Activated naive CD4-positive, alpha-beta T cell treated with anti-CD3 and anti-CD28 coated beads for 36 hours (primary cell): ENCODE measurements at regions of chr7 and their contacts with region 1.

Region 1: GRCh38 chr7:98106647-98107445 is at the start of gene LMTK2:
- DNase-seq: peak; percentile 96
- H3K4me3 Mint-ChIP-seq: peak within 1 kb of the TSS; percentile 94
- H3K27ac Mint-ChIP-seq: peak within 1 kb of the TSS; percentile 72
- H3K4me1 Mint-ChIP-seq: peaks cover 38% of the 10 kb centered on the region
- H3K27me3 Mint-ChIP-seq: peaks cover 8% of the 10 kb centered on the region
- total RNA-seq, gene LMTK2: 11.4 to 13.1 TPM

Region 2: DNA sequence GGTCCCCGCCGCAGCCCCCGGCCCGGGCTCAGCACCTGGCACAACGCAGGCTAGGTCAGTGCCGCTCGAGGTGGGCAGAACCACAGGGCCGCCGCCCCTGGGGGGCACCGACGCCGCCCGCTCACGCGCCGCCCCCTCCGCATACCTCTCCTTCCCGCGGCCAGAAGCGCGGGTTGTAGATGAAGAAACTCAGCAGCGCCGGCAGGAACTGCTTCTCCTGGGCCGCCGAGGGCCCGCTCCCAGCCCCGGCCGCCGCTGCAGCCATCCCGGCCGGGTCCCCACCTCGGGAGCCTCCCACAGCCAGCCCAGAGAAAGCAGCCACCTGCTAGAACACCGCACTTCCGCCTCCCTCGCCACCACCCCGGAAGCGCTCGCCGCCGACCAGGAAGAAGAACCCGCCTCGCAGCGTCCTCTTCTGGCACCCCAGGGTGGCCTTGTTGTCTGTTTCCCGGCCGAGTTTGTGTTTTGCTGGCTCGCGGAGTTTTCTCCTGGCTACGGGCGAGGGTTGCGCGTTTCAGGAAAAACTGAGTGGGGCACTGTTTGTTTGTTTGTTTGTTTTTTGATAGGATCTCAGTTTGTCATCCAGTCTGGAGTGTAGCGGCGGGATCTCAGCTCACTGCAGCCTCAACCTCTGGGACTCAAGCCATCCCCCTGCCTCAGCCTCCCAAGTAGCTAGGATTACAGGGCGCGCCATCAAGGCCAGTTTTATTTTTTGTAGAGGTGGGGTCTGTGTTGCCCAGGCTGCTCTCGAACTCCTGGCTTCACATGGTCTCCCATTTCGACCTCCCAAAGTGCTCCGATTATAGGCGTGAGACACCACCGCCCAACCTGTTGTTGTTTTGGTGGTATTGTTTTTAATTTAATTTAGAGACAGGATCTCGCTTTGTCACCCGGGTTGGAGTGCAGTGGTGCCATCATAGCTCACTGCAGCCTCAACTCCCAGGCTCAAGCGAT is 134.6 kb before region 1 on chr7:
- CTCF ChIA-PET with region 1: no interaction called
- intact Hi-C with region 1: loop called (anchors 1 kb)
- DNase-seq: peak; percentile 91
- H3K4me3 Mint-ChIP-seq: peak overlapping the region; percentile 94
- H3K27ac Mint-ChIP-seq: peak overlapping the region; percentile 95
- H3K4me1 Mint-ChIP-seq: peaks cover 27% of the 10 kb centered on the region
- H3K27me3 Mint-ChIP-seq: no peaks in the 10 kb centered on the region

Region 3: GRCh38 chr7:98051118-98051744 is 55.6 kb before region 1 on chr7:
- CTCF ChIA-PET with region 1: interaction called, 3 read pairs
- intact Hi-C with region 1: loop called (anchors 5 kb)
- DNase-seq: peak; percentile 82
- H3K4me3 Mint-ChIP-seq: peak overlapping the region; percentile 24
- H3K27ac Mint-ChIP-seq: no peak overlapping the region
- H3K4me1 Mint-ChIP-seq: peaks cover 8% of the 10 kb centered on the region
- H3K27me3 Mint-ChIP-seq: no peaks in the 10 kb centered on the region

Region 4: GRCh38 chr7:98168181-98168905 is 61.5 kb after region 1 on chr7:
- CTCF ChIA-PET with region 1: interaction called, 69 read pairs
- intact Hi-C with region 1: loop called (anchors 1 kb)
- DNase-seq: peak; percentile 81
- H3K4me3 Mint-ChIP-seq: no peak overlapping the region
- H3K27ac Mint-ChIP-seq: no peak overlapping the region
- H3K4me1 Mint-ChIP-seq: peaks cover 11% of the 10 kb centered on the region
- H3K27me3 Mint-ChIP-seq: no peaks in the 10 kb centered on the region

Region 5: DNA sequence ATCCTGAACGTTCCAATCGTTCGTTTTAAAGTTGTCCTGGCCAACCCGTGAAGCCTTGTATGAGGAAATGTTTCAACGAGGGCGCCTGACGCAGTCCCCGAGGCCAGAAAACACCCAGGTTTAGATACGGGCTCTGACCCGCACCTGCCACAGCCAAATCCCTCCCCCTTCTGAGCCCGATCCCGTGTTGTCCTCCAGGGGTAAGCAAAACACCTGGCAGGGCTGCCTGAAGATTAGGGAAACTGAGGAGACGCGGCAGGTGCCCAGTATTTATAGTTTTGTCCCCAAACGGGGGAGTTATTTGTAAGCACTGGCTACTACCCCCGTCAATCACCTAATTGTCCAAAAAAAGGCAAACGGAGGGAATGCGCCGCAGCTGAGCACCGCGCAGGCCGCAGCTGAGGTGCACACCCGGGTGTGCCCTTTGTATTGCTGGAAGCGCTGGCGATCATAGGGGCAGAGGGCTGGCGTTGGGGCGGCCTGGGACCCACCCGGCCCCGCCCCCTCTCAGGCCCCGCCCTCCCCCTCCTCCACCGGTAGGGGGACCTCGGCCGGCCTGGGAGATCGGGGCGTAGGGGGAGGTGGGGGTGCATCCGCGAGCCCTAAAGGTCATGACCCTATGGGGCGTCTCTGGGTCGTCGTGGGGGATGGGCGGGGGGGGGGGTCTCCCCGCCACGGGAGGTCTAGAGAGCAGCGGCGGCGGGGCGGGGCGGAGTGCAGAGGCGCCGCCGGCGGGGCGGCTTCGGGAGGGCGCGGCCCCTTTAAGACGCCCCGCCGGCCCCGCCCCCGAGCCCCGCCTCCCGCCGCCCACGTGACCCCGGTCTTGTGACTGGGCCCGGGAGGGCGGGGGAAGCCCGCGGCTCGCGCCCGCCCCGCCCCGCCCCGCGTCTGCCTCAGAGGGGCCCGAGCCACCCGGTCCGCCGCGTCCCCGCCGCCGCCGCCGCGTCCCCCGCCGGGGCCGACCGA is 174.2 kb after region 1 on chr7 and contains the start of gene BRI3:
- CTCF ChIA-PET with region 1: no interaction called
- intact Hi-C with region 1: loop called (anchors 1 kb)
- DNase-seq: peak; percentile 91
- H3K4me3 Mint-ChIP-seq: peak within 1 kb of the TSS; percentile 77
- H3K27ac Mint-ChIP-seq: peak within 1 kb of the TSS; percentile 41
- H3K4me1 Mint-ChIP-seq: peaks cover 29% of the 10 kb centered on the region
- H3K27me3 Mint-ChIP-seq: no peaks in the 10 kb centered on the region
- total RNA-seq, gene BRI3: 51.6 to 54.4 TPM